IMR-90 (cell line): ENCODE measurements at regions of chr11 and their contacts with region 1.

Region 1: DNA sequence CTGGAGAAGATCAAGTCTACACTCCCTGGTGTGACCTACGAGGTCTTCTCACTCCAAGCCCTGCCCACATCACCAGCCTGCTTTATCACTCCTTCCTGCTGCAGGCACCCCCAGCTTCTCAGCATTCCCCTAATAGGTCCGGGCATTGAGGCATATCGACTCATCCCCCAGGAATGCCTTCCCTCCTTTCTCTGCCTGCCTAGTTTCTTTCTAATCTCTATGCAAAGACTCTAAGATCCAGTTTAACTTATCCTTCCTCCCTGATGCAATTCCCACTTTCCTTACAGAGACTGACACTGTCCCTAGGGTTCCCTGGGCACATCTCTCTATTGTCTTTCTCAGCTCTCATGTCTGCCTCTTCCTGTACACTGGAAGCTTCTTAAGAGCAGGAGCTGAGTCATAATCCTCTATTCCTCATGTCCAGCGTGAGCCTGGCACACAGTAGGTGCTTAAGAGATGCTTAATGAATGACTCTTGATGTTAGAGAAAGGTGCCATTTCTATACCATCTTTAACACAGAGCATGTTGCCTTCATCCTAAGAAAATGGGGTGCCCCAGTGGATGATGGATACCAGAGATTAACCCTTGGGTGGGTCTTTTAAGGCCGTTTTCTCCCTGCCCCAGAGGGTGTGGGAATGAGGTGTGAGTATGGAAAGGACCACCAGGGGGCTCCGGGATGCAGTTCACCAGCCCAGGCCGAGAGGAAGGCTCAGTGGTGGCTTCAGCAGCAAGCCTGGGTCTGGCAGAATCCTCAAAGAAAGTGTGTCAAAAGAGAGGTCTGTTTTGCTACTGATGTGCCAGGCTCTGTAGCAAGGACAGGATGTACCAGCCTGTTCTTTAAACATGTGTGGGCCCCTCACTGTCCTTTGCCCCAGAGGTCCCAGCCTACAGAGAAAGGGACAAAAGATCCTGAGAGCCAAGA is 34.7 kb downstream of the PARVA start:
- DNase-seq: peak; percentile 95
- ATAC-seq: peak; percentile 80
- H3K4me3 ChIP-seq: peak overlapping the region; percentile 2; the same call in 1 of the 2 replicates
- H3K27ac ChIP-seq: peak overlapping the region; percentile 95
- H3K4me1 ChIP-seq: peaks cover 54% of the 10 kb centered on the region
- H3K27me3 ChIP-seq: no peaks in the 10 kb centered on the region
- CTCF ChIP-seq: peak; percentile 85
- POLR2A ChIP-seq: no peak
- RAD21 ChIP-seq: peak; percentile 84

Region 2: DNA sequence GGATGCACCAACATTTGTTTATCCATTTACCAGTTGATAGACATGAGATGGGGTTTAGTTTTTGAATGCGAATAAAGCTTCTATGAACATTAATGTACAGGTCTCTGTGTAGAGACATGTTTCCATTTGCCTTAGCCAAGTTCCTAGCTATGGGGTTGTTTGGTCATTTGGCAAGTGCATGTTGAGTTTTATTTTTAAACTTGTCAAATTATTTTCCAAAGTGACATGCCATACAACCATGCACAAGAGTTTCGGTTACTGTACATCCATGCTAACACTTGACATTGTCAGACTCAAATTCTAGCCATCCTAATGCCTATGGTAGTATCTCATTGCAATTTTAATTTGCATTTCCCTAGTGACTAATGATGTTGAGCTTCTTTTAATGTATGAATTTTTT is 105.2 kb before region 1 on chr11:
- CTCF ChIA-PET with region 1: no interaction called
- POLR2A ChIA-PET with region 1: no interaction called
- dilution Hi-C with region 1: no loop called
- in situ Hi-C with region 1: no loop called
- intact Hi-C with region 1: no loop called
- DNase-seq: no peak
- ATAC-seq: no peak
- H3K4me3 ChIP-seq: no peak overlapping the region
- H3K27ac ChIP-seq: no peak overlapping the region
- H3K4me1 ChIP-seq: no peaks in the 10 kb centered on the region
- H3K27me3 ChIP-seq: no peaks in the 10 kb centered on the region
- CTCF ChIP-seq: no peak
- POLR2A ChIP-seq: no peak
- RAD21 ChIP-seq: no peak

Region 3: GRCh38 chr11:12377824-12378593 is 34.1 kb before region 1 on chr11:
- CTCF ChIA-PET with region 1: no interaction called
- POLR2A ChIA-PET with region 1: interaction called, 4 read pairs
- dilution Hi-C with region 1: no loop called
- in situ Hi-C with region 1: no loop called
- intact Hi-C with region 1: loop called (anchors 1 kb)
- DNase-seq: peak; percentile 71
- ATAC-seq: peak; percentile 73
- H3K4me3 ChIP-seq: peak overlapping the region; percentile 96
- H3K27ac ChIP-seq: peak overlapping the region; percentile 100
- H3K4me1 ChIP-seq: peaks cover 15% of the 10 kb centered on the region
- H3K27me3 ChIP-seq: no peaks in the 10 kb centered on the region
- CTCF ChIP-seq: peak; percentile 36
- POLR2A ChIP-seq: peak; percentile 82
- RAD21 ChIP-seq: 0 out of 2 replicates have a peak, but pooled peaks have one; percentile 15

Region 4: GRCh38 chr11:12430955-12431354 is 18.9 kb after region 1 on chr11:
- CTCF ChIA-PET with region 1: interaction called, 5 read pairs
- POLR2A ChIA-PET with region 1: no interaction called
- dilution Hi-C with region 1: no loop called
- in situ Hi-C with region 1: no loop called
- intact Hi-C with region 1: loop called (anchors 1 kb)
- DNase-seq: peak; percentile 91
- ATAC-seq: peak; percentile 65
- H3K4me3 ChIP-seq: no peak overlapping the region
- H3K27ac ChIP-seq: peak overlapping the region; percentile 71
- H3K4me1 ChIP-seq: peaks cover 40% of the 10 kb centered on the region
- H3K27me3 ChIP-seq: no peaks in the 10 kb centered on the region
- CTCF ChIP-seq: no peak
- POLR2A ChIP-seq: no peak
- RAD21 ChIP-seq: no peak

Region 5: DNA sequence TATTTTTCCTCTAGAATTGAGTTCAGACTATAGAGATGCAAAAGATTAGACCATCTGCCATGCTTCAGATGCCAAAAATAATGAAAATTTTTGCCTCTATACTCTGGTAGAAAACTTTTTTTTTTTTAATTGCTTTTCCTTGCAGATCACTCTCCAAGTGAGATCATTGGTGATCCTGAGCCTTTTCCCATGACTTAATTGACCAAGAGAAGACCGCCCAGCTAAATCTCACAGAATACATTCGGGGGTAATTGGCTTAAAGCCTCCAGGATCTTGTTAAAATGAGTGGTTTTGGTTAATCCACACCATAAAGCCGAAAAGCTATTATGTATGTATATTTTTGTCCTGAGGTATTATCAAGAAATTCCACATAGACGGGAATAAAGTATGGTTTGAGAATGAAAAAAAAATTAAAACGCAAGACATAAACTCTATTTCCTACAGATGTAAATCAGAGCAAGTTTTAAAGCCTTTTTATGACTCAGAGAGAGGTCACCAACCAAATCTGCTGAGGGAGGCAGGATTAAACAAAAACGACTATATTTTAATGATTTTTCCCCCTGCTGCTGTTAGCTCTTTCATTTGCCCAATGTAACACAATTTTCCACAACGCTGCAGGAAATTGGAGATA is 29.3 kb after region 1 on chr11:
- CTCF ChIA-PET with region 1: no interaction called
- POLR2A ChIA-PET with region 1: no interaction called
- dilution Hi-C with region 1: no loop called
- in situ Hi-C with region 1: no loop called
- intact Hi-C with region 1: no loop called
- DNase-seq: peak; percentile 62
- ATAC-seq: peak; percentile 74
- H3K4me3 ChIP-seq: no peak overlapping the region
- H3K27ac ChIP-seq: peak overlapping the region; percentile 33; the same call in 1 of the 2 replicates
- H3K4me1 ChIP-seq: peaks cover 5% of the 10 kb centered on the region
- H3K27me3 ChIP-seq: no peaks in the 10 kb centered on the region
- CTCF ChIP-seq: no peak
- POLR2A ChIP-seq: no peak
- RAD21 ChIP-seq: no peak

Region 6: DNA sequence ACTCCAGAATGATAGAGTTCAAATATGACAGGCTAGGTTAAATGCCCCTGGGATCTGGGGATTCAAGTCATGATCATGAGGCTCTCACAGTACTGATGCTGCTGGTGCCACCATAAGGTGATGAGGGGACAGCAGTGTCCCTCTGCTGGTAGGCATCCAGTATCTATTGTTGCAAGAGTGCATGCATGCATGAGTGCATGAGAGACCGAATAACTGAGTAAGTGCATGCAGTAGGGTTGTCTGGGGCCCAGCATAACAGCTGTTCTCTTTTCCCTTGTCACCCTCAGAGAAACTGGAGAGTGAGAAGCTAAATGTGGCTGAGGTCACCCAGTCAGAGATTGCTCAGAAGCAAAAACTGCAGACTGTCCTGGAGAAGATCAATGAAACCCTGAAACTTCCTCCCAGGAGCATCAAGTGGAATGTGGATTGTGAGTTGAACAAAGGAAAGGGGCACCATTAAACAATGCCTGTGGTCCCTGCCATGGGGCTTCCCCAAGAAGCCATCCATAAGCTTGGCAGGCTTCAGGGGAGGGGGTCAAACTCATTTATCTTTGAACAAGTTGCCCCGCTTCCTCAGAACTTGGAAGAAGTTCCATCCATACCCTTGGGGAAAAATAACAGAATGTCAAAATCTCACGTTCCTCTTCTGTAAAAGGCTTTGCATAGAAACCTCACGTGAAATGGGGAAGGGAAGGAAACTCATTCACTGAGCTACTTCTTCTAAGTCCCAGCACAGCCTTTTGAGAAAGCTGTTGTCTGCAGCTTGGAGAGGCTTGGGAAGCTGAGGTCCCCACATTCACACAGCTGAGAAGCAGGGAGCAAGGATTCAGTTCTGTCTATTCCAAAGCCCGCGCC is 84.3 kb after region 1 on chr11:
- CTCF ChIA-PET with region 1: no interaction called
- POLR2A ChIA-PET with region 1: no interaction called
- dilution Hi-C with region 1: no loop called
- in situ Hi-C with region 1: no loop called
- intact Hi-C with region 1: loop called (anchors 2 kb)
- DNase-seq: peak; percentile 40
- ATAC-seq: peak; percentile 66
- H3K4me3 ChIP-seq: no peak overlapping the region
- H3K27ac ChIP-seq: peak overlapping the region; percentile 34; the same call in 1 of the 2 replicates
- H3K4me1 ChIP-seq: peaks cover 11% of the 10 kb centered on the region
- H3K27me3 ChIP-seq: no peaks in the 10 kb centered on the region
- CTCF ChIP-seq: 0 out of 2 replicates have a peak, but pooled peaks have one; percentile 10
- POLR2A ChIP-seq: no peak
- RAD21 ChIP-seq: no peak

Region 7: DNA sequence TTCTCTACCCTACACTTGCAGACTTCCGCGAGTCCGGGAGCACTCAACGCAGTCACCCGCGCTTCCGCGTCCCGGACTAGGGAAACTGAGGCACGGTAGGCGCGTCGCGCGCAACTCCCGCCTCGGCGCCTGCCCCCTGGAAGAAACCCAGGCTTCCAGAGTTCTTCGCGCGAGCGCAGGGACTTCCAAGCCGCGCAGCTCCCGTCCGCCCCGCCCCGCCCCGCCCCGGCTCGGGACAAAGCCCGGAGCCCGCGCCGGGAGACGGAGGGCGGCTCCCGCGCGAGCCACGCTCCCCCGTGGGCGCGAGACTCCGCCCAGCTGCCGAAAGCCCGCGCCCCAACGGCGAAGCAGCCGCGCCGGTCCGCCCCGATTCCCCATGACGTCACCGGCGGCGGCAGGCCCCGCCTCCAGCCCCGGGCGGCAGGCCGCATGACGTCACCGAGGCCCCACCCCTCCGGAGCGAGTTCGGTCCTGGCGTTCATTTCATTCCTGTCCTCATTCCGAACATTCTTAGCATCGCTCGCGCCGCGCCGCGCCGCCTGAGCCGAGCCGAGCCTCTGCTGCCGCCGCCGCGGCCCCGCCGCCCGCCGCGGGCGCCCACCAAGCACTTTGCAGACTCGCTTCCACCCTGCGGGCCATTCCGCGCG is 262.0 kb after region 1 on chr11 and contains the start of gene TEAD1:
- CTCF ChIA-PET with region 1: no interaction called
- POLR2A ChIA-PET with region 1: no interaction called
- dilution Hi-C with region 1: no loop called
- in situ Hi-C with region 1: loop called (anchors 5 kb)
- intact Hi-C with region 1: loop called (anchors 1 kb)
- DNase-seq: peak; percentile 95
- ATAC-seq: peak; percentile 90
- H3K4me3 ChIP-seq: peak within 1 kb of the TSS; percentile 78
- H3K27ac ChIP-seq: peak within 1 kb of the TSS; percentile 100
- H3K4me1 ChIP-seq: peaks cover 3% of the 10 kb centered on the region
- H3K27me3 ChIP-seq: no peaks in the 10 kb centered on the region
- CTCF ChIP-seq: no peak
- POLR2A ChIP-seq: peak; percentile 55
- RAD21 ChIP-seq: no peak
- total RNA-seq, gene TEAD1: 69.2 and 95.5 TPM in 2 replicates

Region 8: DNA sequence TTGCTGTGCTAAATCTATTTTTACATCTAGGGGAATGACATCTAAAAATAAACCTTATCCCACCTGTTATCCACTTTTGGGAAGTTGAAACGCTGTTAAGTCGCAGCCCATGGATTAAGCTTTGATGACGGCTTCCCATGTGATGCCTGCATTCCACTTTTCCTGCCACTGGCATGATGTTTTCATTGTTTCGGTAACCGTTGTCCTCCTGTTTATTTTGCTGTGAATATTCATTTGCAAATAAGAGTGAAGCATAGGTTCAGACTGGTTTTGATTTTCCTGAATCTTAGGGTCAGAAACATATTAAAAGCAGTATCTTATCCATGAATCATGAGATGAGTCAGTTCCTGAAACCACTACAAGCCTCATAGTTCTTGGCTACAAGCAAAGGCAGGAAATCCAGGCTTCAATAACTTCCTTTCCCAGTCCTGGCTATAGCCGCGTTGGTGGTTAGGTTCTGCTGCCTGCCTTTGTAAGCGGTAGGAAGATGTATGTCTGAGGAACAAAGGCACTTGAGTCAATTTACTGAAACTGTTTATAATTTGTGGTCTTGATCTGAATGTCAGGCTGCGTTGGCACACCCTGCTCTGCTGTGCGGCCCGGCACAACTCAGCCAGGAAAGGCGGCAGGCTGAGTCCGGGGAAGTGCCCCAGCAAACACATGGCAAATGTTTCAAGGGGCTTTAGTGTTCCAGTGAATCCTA is 281.6 kb after region 1 on chr11:
- CTCF ChIA-PET with region 1: no interaction called
- POLR2A ChIA-PET with region 1: no interaction called
- dilution Hi-C with region 1: no loop called
- in situ Hi-C with region 1: no loop called
- intact Hi-C with region 1: no loop called
- DNase-seq: peak; percentile 99
- ATAC-seq: peak; percentile 76
- H3K4me3 ChIP-seq: peak overlapping the region; percentile 0; the same call in 1 of the 2 replicates
- H3K27ac ChIP-seq: peak overlapping the region; percentile 76
- H3K4me1 ChIP-seq: peaks cover 45% of the 10 kb centered on the region
- H3K27me3 ChIP-seq: no peaks in the 10 kb centered on the region
- CTCF ChIP-seq: no peak
- POLR2A ChIP-seq: peak; percentile 83
- RAD21 ChIP-seq: peak; percentile 10; the same call in 1 of the 2 replicates

Region 9: GRCh38 chr11:12900496-12900895 is 488.4 kb after region 1 on chr11:
- CTCF ChIA-PET with region 1: no interaction called
- POLR2A ChIA-PET with region 1: no interaction called
- dilution Hi-C with region 1: no loop called
- in situ Hi-C with region 1: loop called (anchors 10 kb)
- intact Hi-C with region 1: no loop called
- DNase-seq: peak; percentile 94
- ATAC-seq: peak; percentile 84
- H3K4me3 ChIP-seq: no peak overlapping the region
- H3K27ac ChIP-seq: no peak overlapping the region
- H3K4me1 ChIP-seq: peaks cover 22% of the 10 kb centered on the region
- H3K27me3 ChIP-seq: no peaks in the 10 kb centered on the region
- CTCF ChIP-seq: no peak
- POLR2A ChIP-seq: no peak
- RAD21 ChIP-seq: no peak